ENCODE measurements at regions of chr20 and their contacts with region 1.

Region 1: GRCh38 chr20:62907384-62908317 is 18.7 kb downstream of the DIDO1 start:
- DNase-seq: peak; percentile 59
- H3K4me3 Mint-ChIP-seq: no peak overlapping the region
- H3K27ac Mint-ChIP-seq: no peak overlapping the region
- H3K4me1 Mint-ChIP-seq: peaks cover 16% of the 10 kb centered on the region
- H3K27me3 Mint-ChIP-seq: no peaks in the 10 kb centered on the region

Region 2: GRCh38 chr20:62723351-62723750 is 184.3 kb before region 1 on chr20:
- CTCF ChIA-PET with region 1: no interaction called
- DNase-seq: no peak
- H3K4me3 Mint-ChIP-seq: no peak overlapping the region
- H3K27ac Mint-ChIP-seq: no peak overlapping the region
- H3K4me1 Mint-ChIP-seq: peaks cover 18% of the 10 kb centered on the region
- H3K27me3 Mint-ChIP-seq: peaks cover 86% of the 10 kb centered on the region

Region 3: GRCh38 chr20:62891111-62891510 is 16.5 kb before region 1 on chr20:
- CTCF ChIA-PET with region 1: interaction called, 14 read pairs
- DNase-seq: peak; percentile 72
- H3K4me3 Mint-ChIP-seq: no peak overlapping the region
- H3K27ac Mint-ChIP-seq: peak overlapping the region; percentile 93
- H3K4me1 Mint-ChIP-seq: peaks cover 62% of the 10 kb centered on the region
- H3K27me3 Mint-ChIP-seq: no peaks in the 10 kb centered on the region

Region 4: DNA sequence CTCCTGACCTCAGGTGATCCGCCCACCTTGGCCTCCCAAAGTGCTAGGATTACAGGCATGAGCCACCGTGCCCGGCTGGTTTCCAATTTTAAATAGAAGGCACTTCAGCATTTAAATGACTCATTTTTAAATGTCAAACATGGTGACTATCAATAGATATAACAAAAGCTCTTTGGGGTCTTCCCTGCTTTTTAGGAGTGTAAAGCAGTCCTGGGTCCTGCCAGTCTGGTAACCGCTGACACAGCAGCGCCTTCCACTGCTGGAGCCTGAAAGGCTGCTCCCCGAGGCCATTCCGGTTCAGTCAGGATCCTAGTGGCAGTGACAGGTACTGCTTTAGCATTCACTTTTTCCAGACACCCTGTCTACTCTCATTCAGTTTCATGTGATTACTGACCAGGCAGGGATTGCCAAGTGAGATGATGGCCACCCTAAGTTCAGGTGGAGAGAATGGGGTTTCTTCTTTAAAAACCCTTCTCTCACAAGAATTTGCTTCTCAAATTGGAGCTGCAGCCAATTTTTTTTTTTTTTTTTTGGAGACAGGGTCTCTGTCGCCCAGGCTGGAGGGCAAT is 13.6 kb after region 1 on chr20:
- CTCF ChIA-PET with region 1: interaction called, 58 read pairs
- DNase-seq: peak; percentile 76
- H3K4me3 Mint-ChIP-seq: peak overlapping the region; percentile 64
- H3K27ac Mint-ChIP-seq: peak overlapping the region; percentile 90
- H3K4me1 Mint-ChIP-seq: peaks cover 84% of the 10 kb centered on the region
- H3K27me3 Mint-ChIP-seq: no peaks in the 10 kb centered on the region

Region 5: DNA sequence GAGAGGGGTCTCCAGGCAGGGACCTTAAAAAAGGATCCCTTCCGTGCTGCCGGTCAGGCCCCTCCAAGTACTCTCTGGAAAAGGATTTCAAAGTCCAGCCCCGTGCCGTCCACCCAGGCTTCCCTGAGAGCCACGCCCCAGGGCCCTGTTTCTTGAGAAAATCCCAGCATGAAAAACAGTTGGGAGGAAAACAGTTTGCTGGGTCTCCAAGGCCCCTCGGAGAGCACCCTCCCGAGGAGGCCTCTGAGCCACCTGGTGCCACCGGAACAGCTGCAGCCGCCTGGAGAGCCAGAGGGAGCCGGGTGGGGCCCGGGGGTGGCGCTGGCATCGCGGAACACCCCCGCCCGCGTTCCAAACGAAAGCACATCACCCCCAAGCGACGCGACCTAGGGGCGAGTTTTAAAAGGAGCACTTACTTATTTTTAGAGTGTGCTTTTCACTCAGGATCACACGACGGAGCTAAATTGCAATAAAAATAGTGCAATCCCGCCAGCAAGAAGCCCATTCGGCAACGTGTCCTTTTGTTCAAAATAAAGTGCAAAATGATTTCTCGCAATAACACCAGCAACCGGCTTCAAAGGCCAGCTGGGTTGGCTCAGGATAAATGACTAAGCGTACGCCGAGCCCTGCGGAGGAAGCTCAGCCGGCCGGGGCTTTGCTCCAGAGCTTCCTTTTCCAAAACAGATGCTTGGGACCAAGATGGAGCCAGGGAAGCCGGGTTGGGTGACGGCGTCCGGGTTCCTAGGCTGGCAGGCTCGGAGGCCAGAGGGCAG is 244.1 kb after region 1 on chr20:
- CTCF ChIA-PET with region 1: no interaction called
- DNase-seq: no peak
- H3K4me3 Mint-ChIP-seq: no peak overlapping the region
- H3K27ac Mint-ChIP-seq: no peak overlapping the region
- H3K4me1 Mint-ChIP-seq: no peaks in the 10 kb centered on the region
- H3K27me3 Mint-ChIP-seq: peaks cover 37% of the 10 kb centered on the region